ENCODE measurements at regions of chr18 and their contacts with region 1.

Region 1: DNA sequence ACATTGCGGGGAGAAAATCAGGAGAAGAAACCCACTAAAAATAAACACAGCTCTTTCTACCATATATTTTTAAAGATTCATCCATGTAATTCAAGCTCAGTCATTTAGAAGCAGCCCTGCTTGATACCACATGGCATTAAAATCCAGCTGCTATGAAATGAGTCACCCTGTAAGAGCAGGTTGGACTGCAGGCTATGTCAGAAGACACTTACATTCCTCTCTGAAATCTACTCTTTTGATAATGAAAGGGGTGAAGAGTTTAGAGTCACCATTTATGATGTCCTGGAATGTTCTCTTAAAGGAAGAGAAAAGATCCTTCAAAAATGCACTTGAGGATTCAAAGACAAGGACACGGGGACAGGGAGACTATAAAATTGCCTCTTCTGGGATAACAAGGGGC is 100.6 kb upstream of the APCDD1 start:
- DNase-seq: no peak
- H3K4me3 ChIP-seq: no peak overlapping the region
- H3K27ac ChIP-seq: peak overlapping the region; percentile 84 to 85
- H3K4me1 ChIP-seq: peaks cover 2 to 8% of the 10 kb centered on the region in 2 donors
- H3K27me3 ChIP-seq: no peaks in the 10 kb centered on the region
- CTCF ChIP-seq: no peak
- POLR2A ChIP-seq: no peak

Region 2: GRCh38 chr18:10322435-10322834 is 31.4 kb before region 1 on chr18:
- intact Hi-C with region 1: loop called (anchors 2 kb)
- DNase-seq: no peak
- H3K4me3 ChIP-seq: no peak overlapping the region
- H3K27ac ChIP-seq: no peak overlapping the region
- H3K4me1 ChIP-seq: peaks cover 0 to 4% of the 10 kb centered on the region in 2 donors
- H3K27me3 ChIP-seq: no peaks in the 10 kb centered on the region
- CTCF ChIP-seq: no peak
- POLR2A ChIP-seq: no peak

Measured in breast epithelium (tissue), 4 donors.